ENCODE measurements at regions of chr10 and their contacts with region 1.

Region 1: GRCh38 chr10:73495884-73496674 is at the start of gene PPP3CB:
- DNase-seq: peak; percentile 96
- ATAC-seq: peak; percentile 81
- H3K4me3 Mint-ChIP-seq: peak within 1 kb of the TSS; percentile 91
- H3K27ac Mint-ChIP-seq: peak within 1 kb of the TSS; percentile 99
- H3K4me1 Mint-ChIP-seq: peaks cover 45% of the 10 kb centered on the region
- H3K27me3 Mint-ChIP-seq: no peaks in the 10 kb centered on the region
- total RNA-seq, gene PPP3CB: 42.3 to 45.3 TPM

Region 2: GRCh38 chr10:73252445-73253224 is 243.4 kb before region 1 on chr10 and contains the start of gene MRPS16:
- CTCF ChIA-PET with region 1: no interaction called
- POLR2A ChIA-PET with region 1: interaction called, 7 read pairs
- intact Hi-C with region 1: loop called (anchors 1 to 2 kb)
- DNase-seq: peak; percentile 95
- ATAC-seq: peak; percentile 84
- H3K4me3 Mint-ChIP-seq: peak within 1 kb of the TSS; percentile 94
- H3K27ac Mint-ChIP-seq: peak within 1 kb of the TSS; percentile 98
- H3K4me1 Mint-ChIP-seq: peaks cover 32% of the 10 kb centered on the region
- H3K27me3 Mint-ChIP-seq: no peaks in the 10 kb centered on the region
- total RNA-seq, gene MRPS16: 123 to 138 TPM

Region 3: GRCh38 chr10:73358331-73359279 is 137.5 kb before region 1 on chr10 and contains the start of gene CFAP70:
- CTCF ChIA-PET with region 1: no interaction called
- POLR2A ChIA-PET with region 1: no interaction called
- intact Hi-C with region 1: loop called (anchors 2 to 5 kb)
- DNase-seq: peak; percentile 96
- ATAC-seq: peak; percentile 100
- H3K4me3 Mint-ChIP-seq: peak within 1 kb of the TSS; percentile 97
- H3K27ac Mint-ChIP-seq: peak within 1 kb of the TSS; percentile 84
- H3K4me1 Mint-ChIP-seq: peaks cover 14% of the 10 kb centered on the region
- H3K27me3 Mint-ChIP-seq: no peaks in the 10 kb centered on the region
- total RNA-seq, gene CFAP70: 0.58 to 0.71 TPM

Region 4: GRCh38 chr10:73413528-73414229 is 82.4 kb before region 1 on chr10 and contains the start of gene ANXA7:
- CTCF ChIA-PET with region 1: no interaction called
- POLR2A ChIA-PET with region 1: interaction called, 5 read pairs
- intact Hi-C with region 1: loop called (anchors 1 kb)
- DNase-seq: peak; percentile 97
- ATAC-seq: peak; percentile 96
- H3K4me3 Mint-ChIP-seq: peak within 1 kb of the TSS; percentile 94
- H3K27ac Mint-ChIP-seq: peak within 1 kb of the TSS; percentile 93
- H3K4me1 Mint-ChIP-seq: peaks cover 52% of the 10 kb centered on the region
- H3K27me3 Mint-ChIP-seq: peaks cover 3% of the 10 kb centered on the region
- total RNA-seq, gene ANXA7: 94.6 to 118 TPM

Region 5: DNA sequence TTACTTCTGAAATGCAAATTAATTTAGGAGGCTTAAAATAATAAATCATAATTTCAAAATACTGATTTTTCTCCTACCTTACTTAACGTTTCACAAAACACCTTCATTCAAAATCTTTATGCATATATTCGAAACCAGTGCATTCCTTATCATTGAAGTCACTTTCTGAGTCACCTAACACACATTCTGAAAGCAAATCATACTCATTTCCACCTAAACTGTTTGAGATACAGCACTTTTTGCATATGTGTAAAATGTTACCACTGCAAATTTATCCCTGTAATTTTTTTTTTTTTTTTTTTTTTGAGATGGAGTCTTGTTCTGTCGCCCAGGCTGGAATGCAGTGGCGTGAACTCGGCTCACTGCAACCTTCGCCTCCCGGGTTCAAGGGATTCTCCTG is 15.9 kb before region 1 on chr10:
- CTCF ChIA-PET with region 1: interaction called, 6 read pairs
- POLR2A ChIA-PET with region 1: interaction called, 4 read pairs
- intact Hi-C with region 1: loop called (anchors 1 kb)
- DNase-seq: no peak
- ATAC-seq: peak; percentile 81
- H3K4me3 Mint-ChIP-seq: no peak overlapping the region
- H3K27ac Mint-ChIP-seq: no peak overlapping the region
- H3K4me1 Mint-ChIP-seq: peaks cover 31% of the 10 kb centered on the region
- H3K27me3 Mint-ChIP-seq: no peaks in the 10 kb centered on the region

Region 6: GRCh38 chr10:73730153-73730906 is 234.3 kb after region 1 on chr10:
- CTCF ChIA-PET with region 1: no interaction called
- POLR2A ChIA-PET with region 1: no interaction called
- intact Hi-C with region 1: loop called in 1 of 2 experiments (anchors 1 kb)
- DNase-seq: peak; percentile 95
- ATAC-seq: peak; percentile 93
- H3K4me3 Mint-ChIP-seq: peak overlapping the region; percentile 98
- H3K27ac Mint-ChIP-seq: peak overlapping the region; percentile 97
- H3K4me1 Mint-ChIP-seq: peaks cover 9% of the 10 kb centered on the region
- H3K27me3 Mint-ChIP-seq: no peaks in the 10 kb centered on the region

Region 7: GRCh38 chr10:73785221-73785720 is 289.2 kb after region 1 on chr10 and contains the start of gene ZSWIM8:
- CTCF ChIA-PET with region 1: no interaction called
- POLR2A ChIA-PET with region 1: no interaction called
- intact Hi-C with region 1: loop called in 1 of 2 experiments (anchors 1 kb)
- DNase-seq: peak; percentile 90
- ATAC-seq: peak; percentile 85
- H3K4me3 Mint-ChIP-seq: peak within 1 kb of the TSS; percentile 83
- H3K27ac Mint-ChIP-seq: peak within 1 kb of the TSS; percentile 98
- H3K4me1 Mint-ChIP-seq: peaks cover 46% of the 10 kb centered on the region
- H3K27me3 Mint-ChIP-seq: no peaks in the 10 kb centered on the region
- total RNA-seq, gene ZSWIM8: 40.1 to 67.3 TPM

Measured in activated CD4-positive, alpha-beta T cell treated with anti-CD3 and anti-CD28 coated beads for 36 hours (primary cell).